Esophagus muscularis mucosa (tissue), 4 donors: ENCODE measurements at regions of chrX and their contacts with region 1.

Region 1: DNA sequence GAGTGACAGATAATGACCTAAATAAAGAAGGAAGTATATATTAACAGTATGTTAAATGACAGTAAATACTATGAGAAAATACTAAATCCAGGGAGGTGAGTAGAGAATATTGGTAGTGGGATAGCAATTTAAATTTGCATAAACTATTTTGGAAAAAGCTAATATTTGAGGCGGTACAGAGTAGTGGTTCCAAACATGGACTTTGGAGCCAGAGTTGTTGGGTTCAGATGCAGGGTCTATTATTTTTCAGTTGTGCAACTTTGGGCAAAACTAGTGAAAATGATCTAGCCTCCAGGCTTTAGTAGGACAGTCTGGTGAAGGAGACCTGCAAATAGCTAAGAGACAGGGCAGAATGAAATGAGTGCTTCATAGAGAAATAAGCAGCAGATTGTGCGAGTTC is 84.8 kb upstream of the SOX3 start:
- DNase-seq: no peak
- H3K4me3 ChIP-seq: no peak overlapping the region
- H3K27ac ChIP-seq: no peak overlapping the region
- H3K4me1 ChIP-seq: no peaks in the 10 kb centered on the region
- H3K27me3 ChIP-seq: no peaks in the 10 kb centered on the region
- CTCF ChIP-seq: no peak
- EP300 ChIP-seq: no peak
- POLR2A ChIP-seq: no peak

Region 2: DNA sequence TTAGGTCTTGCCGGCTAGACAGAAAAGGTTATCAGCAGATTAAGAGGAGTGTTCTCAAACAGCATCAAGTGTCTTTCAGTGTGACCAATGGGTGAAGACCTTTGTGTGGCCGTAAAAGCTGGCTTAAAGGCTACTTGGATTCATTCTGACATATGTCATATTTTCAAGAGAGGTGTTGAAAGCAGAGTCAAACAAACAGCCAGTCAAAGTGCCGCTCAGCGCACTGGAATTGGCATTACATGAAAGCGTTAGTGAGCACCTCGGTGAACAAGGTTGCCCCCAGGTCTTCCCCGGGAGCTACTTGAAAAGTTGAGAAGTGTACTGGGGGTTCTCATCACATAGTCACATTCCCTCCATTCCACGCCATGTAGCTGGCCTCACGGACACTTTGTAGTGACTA is 233.7 kb before region 1 on chrX:
- intact Hi-C with region 1: no loop called
- DNase-seq: no peak
- H3K4me3 ChIP-seq: no peak overlapping the region
- H3K27ac ChIP-seq: no peak overlapping the region
- H3K4me1 ChIP-seq: no peaks in the 10 kb centered on the region
- H3K27me3 ChIP-seq: no peaks in the 10 kb centered on the region
- CTCF ChIP-seq: no peak
- EP300 ChIP-seq: no peak
- POLR2A ChIP-seq: no peak

Region 3: DNA sequence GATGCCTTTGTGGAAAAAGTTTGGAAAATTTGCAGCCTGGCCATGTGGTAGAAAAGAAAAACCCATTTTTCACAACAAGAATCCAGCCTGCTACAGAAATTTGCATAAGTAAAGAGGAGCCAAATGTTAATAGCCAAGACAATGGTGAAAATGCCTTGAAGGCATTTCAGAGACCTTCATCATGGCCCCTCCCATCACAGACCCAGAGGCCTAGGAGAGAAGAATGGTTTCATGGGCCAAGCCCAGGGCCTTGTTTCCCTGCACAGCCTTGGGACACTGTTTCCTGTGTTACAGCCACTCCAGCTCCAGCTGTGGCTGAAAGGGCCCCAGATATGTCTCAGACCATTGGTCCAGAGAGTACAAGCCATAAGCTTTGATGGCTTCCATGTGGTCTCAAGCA is 18.5 kb after region 1 on chrX:
- intact Hi-C with region 1: loop called (anchors 2 kb)
- DNase-seq: no peak
- H3K4me3 ChIP-seq: no peak overlapping the region
- H3K27ac ChIP-seq: no peak overlapping the region
- H3K4me1 ChIP-seq: no peaks in the 10 kb centered on the region
- H3K27me3 ChIP-seq: no peaks in the 10 kb centered on the region
- CTCF ChIP-seq: no peak
- EP300 ChIP-seq: no peak
- POLR2A ChIP-seq: no peak